ENCODE measurements at regions of chr16 and their contacts with region 1.

Region 1: GRCh38 chr16:68704232-68704867 is 32.7 kb upstream of the CDH1 start:
- DNase-seq: peak in 4 of 5 donors; percentile 17 to 41 (median 22)
- H3K4me3 ChIP-seq: no peak overlapping the region
- H3K4me3 Mint-ChIP-seq: no peak overlapping the region
- H3K27ac ChIP-seq: no peak overlapping the region
- H3K27ac Mint-ChIP-seq: no peak overlapping the region
- H3K4me1 ChIP-seq: no peaks in the 10 kb centered on the region
- H3K4me1 Mint-ChIP-seq: peaks cover 0 to 3% (median 0%) of the 10 kb centered on the region in 4 donors
- H3K27me3 ChIP-seq: no peaks in the 10 kb centered on the region
- H3K27me3 Mint-ChIP-seq: peaks cover 3 to 7% of the 10 kb centered on the region in 2 donors

Region 2: GRCh38 chr16:68689925-68690324 is 14.4 kb before region 1 on chr16:
- CTCF ChIA-PET with region 1: interaction called, 13 read pairs
- POLR2A ChIA-PET with region 1: no interaction called
- intact Hi-C with region 1: no loop called
- DNase-seq: no peak
- H3K4me3 ChIP-seq: no peak overlapping the region
- H3K4me3 Mint-ChIP-seq: no peak overlapping the region
- H3K27ac ChIP-seq: no peak overlapping the region
- H3K27ac Mint-ChIP-seq: no peak overlapping the region
- H3K4me1 ChIP-seq: no peaks in the 10 kb centered on the region
- H3K4me1 Mint-ChIP-seq: no peaks in the 10 kb centered on the region
- H3K27me3 ChIP-seq: no peaks in the 10 kb centered on the region
- H3K27me3 Mint-ChIP-seq: peaks cover 0 to 3% of the 10 kb centered on the region in 2 donors

Region 3: GRCh38 chr16:68800257-68800875 is 96.0 kb after region 1 on chr16:
- CTCF ChIA-PET with region 1: no interaction called
- POLR2A ChIA-PET with region 1: no interaction called
- intact Hi-C with region 1: loop called (anchors 1 kb)
- DNase-seq: peak in 4 of 5 donors; percentile 13 to 33 (median 18)
- H3K4me3 ChIP-seq: no peak overlapping the region
- H3K4me3 Mint-ChIP-seq: no peak overlapping the region
- H3K27ac ChIP-seq: no peak overlapping the region
- H3K27ac Mint-ChIP-seq: peak overlapping the region in 1 of 7 donors; percentile 55
- H3K4me1 ChIP-seq: no peaks in the 10 kb centered on the region
- H3K4me1 Mint-ChIP-seq: no peaks in the 10 kb centered on the region
- H3K27me3 ChIP-seq: no peaks in the 10 kb centered on the region
- H3K27me3 Mint-ChIP-seq: no peaks in the 10 kb centered on the region